ENCODE measurements at regions of chr9 and their contacts with region 1.

Region 1: GRCh38 chr9:2857564-2858198 is 13.8 kb upstream of the PUM3 start:
- DNase-seq: peak; percentile 74
- H3K4me3 Mint-ChIP-seq: no peak overlapping the region
- H3K27ac Mint-ChIP-seq: no peak overlapping the region
- H3K4me1 Mint-ChIP-seq: no peaks in the 10 kb centered on the region
- H3K27me3 Mint-ChIP-seq: peaks cover 60% of the 10 kb centered on the region
- CTCF ChIP-seq: peak; percentile 71

Region 2: DNA sequence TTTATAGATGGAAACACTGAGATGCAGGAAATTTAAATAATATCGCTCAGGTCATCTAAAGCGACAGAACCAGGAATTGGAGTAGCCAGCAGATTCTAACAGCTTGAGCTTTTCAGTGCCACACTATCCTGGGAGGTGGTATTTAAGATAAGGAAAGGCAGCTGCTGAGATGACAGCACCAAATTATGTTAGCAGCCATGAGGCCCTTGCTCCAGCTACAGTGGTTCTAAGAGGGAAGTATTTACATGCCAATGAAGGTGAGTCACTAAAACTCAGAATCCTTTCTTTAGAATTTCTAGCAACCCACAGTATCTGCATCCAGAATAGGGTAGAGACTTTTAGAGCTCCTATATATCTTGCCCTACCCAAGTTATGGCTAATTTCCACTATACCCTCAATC is 363.1 kb before region 1 on chr9:
- CTCF ChIA-PET with region 1: no interaction called
- POLR2A ChIA-PET with region 1: no interaction called
- intact Hi-C with region 1: no loop called
- DNase-seq: no peak
- H3K4me3 Mint-ChIP-seq: no peak overlapping the region
- H3K27ac Mint-ChIP-seq: no peak overlapping the region
- H3K4me1 Mint-ChIP-seq: peaks cover 10% of the 10 kb centered on the region
- H3K27me3 Mint-ChIP-seq: no peaks in the 10 kb centered on the region
- CTCF ChIP-seq: no peak

Region 3: DNA sequence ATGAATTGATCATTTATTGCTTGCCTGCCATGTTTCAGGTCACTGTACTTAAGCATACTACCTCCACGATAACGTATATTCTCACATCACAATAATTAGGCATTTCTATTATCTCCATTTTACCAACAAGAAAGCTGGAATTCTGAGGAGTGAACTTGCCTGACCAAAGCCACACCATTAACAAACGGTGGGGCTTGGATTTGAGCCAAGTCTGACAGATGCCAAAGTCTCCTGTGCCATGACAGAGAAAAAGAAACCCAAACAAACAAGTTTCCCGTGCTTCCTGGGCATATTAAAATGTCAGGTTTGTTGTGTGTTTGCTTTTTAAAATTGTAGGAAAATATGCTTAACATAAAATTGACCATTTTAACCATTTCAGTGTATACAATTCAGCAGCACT is 181.2 kb before region 1 on chr9:
- CTCF ChIA-PET with region 1: no interaction called
- POLR2A ChIA-PET with region 1: no interaction called
- intact Hi-C with region 1: no loop called
- DNase-seq: peak; percentile 10
- H3K4me3 Mint-ChIP-seq: no peak overlapping the region
- H3K27ac Mint-ChIP-seq: no peak overlapping the region
- H3K4me1 Mint-ChIP-seq: peaks cover 7% of the 10 kb centered on the region
- H3K27me3 Mint-ChIP-seq: no peaks in the 10 kb centered on the region
- CTCF ChIP-seq: no peak

Region 4: DNA sequence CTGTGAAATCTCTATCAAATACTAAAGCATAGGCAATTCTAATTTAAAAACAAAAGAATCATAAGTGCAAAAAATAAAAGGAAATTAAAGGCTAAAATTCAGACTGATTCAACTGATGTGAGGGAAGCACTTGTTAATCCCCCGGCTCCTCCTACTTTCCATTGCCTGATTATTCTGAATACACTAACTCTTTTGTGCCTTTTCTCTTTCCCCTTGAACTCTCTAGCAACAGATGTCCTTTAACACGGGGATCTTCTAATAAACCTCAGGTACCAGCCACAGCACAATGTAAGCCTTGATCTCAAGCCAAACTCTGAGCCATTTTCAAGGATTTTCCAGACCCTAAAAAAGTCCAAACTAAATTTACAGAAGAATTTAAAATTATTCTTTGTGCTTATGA is 78.9 kb before region 1 on chr9:
- CTCF ChIA-PET with region 1: no interaction called
- POLR2A ChIA-PET with region 1: no interaction called
- intact Hi-C with region 1: no loop called
- DNase-seq: no peak
- H3K4me3 Mint-ChIP-seq: no peak overlapping the region
- H3K27ac Mint-ChIP-seq: no peak overlapping the region
- H3K4me1 Mint-ChIP-seq: no peaks in the 10 kb centered on the region
- H3K27me3 Mint-ChIP-seq: no peaks in the 10 kb centered on the region
- CTCF ChIP-seq: no peak

Region 5: GRCh38 chr9:2872257-2872935 is 14.7 kb after region 1 on chr9:
- CTCF ChIA-PET with region 1: interaction called, 39 read pairs
- POLR2A ChIA-PET with region 1: no interaction called
- intact Hi-C with region 1: no loop called
- DNase-seq: no peak
- H3K4me3 Mint-ChIP-seq: no peak overlapping the region
- H3K27ac Mint-ChIP-seq: no peak overlapping the region
- H3K4me1 Mint-ChIP-seq: no peaks in the 10 kb centered on the region
- H3K27me3 Mint-ChIP-seq: peaks cover 75% of the 10 kb centered on the region
- CTCF ChIP-seq: no peak

Region 6: GRCh38 chr9:2889023-2889422 is 31.3 kb after region 1 on chr9:
- CTCF ChIA-PET with region 1: no interaction called
- POLR2A ChIA-PET with region 1: no interaction called
- intact Hi-C with region 1: no loop called
- DNase-seq: no peak
- H3K4me3 Mint-ChIP-seq: no peak overlapping the region
- H3K27ac Mint-ChIP-seq: no peak overlapping the region
- H3K4me1 Mint-ChIP-seq: no peaks in the 10 kb centered on the region
- H3K27me3 Mint-ChIP-seq: peaks cover 47% of the 10 kb centered on the region
- CTCF ChIP-seq: no peak

Region 7: DNA sequence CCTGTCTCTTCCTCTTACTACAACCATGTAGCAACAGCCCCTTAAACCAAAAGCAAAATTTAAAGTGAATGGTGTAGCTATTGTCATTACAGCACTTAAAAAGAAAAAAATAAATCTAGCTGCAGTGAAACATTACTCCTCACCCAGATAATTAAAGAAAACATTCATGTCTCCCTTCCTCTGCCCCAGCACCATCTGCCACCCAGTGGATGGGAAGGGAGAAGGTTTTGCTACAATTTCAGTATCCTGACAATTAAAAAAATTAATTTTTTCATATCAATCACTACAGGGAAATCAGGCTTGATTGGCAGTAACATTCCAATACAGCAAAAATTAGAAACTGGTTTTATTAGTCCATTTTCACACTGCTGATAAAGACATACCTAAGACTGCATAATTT is 133.6 kb after region 1 on chr9:
- CTCF ChIA-PET with region 1: interaction called, 4 read pairs
- POLR2A ChIA-PET with region 1: no interaction called
- intact Hi-C with region 1: loop called (anchors 1 kb)
- DNase-seq: peak; percentile 8
- H3K4me3 Mint-ChIP-seq: no peak overlapping the region
- H3K27ac Mint-ChIP-seq: no peak overlapping the region
- H3K4me1 Mint-ChIP-seq: no peaks in the 10 kb centered on the region
- H3K27me3 Mint-ChIP-seq: peaks cover 24% of the 10 kb centered on the region
- CTCF ChIP-seq: no peak

Region 8: DNA sequence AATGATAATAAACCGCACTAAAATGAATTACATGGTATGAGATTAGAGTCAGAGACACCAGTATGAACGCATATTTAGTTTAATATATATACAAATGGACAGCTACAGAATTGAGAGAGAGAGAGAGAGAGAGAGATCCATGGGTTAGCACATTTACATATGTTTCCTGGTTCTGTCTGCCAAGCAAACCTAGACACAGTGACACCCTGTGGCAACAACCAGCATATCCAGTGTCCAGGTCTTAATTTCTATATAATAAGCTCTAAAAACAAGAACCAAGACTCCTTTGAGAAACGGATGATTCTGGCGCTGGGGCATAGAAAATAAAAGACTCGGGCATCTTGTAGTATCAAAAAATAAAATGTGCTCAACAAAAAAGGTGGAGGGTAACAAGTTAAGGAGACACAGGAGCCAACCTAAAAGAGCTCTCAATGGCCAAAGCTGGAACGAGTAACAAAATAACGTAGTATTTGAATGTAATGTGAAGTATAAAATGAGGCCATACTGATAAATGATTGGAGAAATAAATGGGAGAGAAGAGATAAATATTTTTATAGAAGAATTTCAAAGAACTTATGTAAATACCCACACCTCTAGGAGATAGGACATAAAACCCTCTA is 583.6 kb after region 1 on chr9:
- CTCF ChIA-PET with region 1: interaction called, 14 read pairs
- POLR2A ChIA-PET with region 1: no interaction called
- intact Hi-C with region 1: loop called (anchors 5 kb)
- DNase-seq: peak; percentile 68
- H3K4me3 Mint-ChIP-seq: no peak overlapping the region
- H3K27ac Mint-ChIP-seq: no peak overlapping the region
- H3K4me1 Mint-ChIP-seq: peaks cover 8% of the 10 kb centered on the region
- H3K27me3 Mint-ChIP-seq: no peaks in the 10 kb centered on the region
- CTCF ChIP-seq: peak; percentile 52